ENCODE measurements at regions of chr1 and their contacts with region 1.

Region 1: DNA sequence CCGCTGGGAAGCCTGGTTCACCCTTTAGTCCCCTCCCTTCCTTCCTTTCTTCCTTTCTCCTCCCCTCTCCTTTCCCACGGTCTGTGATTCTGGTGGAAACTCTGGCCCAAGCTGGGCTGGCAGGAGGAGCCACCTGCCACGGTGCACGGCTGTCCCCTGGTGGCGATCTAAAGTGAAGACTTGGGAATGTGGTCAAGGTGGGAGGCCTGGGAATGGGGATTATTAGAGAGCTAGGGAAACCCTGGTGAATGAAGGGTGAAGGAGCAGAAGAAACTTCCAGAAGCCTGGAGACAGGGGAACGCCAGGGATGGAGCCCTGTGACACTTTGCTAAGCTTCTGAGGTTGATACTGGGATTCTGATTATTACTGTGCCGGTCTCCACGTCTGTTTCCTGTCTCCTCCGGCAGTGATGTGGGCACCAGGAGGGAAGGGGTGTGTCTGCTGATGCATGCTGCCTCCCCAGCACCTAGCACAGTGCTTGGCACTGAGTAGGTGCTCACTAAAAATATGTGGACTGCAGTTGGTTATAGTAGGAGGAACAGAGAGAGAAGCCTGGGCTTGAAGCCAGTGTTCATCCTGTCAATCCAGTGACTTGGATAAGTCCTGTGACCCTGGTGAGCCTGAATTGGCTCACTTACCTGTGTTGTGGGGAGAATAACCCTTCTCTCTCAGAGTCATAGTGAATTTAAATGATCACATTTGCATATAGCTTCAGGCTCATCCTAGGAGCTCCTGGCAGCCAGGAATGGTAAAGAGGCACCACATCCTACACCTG is 71.2 kb upstream of the NBPF3 start:
- DNase-seq: peak; percentile 86
- H3K4me3 ChIP-seq: no peak overlapping the region
- H3K27ac ChIP-seq: no peak overlapping the region
- H3K4me1 ChIP-seq: no peaks in the 10 kb centered on the region
- H3K27me3 ChIP-seq: no peaks in the 10 kb centered on the region
- CTCF ChIP-seq: peak; percentile 98

Region 2: DNA sequence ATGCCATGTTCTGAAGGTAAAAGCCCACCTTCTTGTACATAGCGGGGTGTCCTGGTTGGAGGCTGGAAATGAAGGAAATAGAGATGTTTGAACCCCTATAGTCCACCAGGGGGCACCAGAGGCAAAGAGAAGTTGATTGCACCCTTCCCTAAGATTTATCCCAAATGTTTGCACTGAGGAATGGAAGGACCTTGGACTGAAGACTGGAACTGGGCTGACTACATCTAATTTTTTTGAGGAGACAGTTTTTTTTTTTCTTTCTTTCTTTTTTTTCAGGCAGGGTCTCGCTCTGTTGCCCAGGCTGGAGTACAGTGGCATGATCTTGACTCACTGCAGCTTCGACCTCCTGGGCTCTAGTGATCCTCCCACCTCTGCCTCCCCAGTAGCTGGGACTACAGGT is 136.7 kb before region 1 on chr1:
- CTCF ChIA-PET with region 1: interaction called, 28 read pairs
- POLR2A ChIA-PET with region 1: interaction called, 4 read pairs
- intact Hi-C with region 1: loop called (anchors 2 kb)
- DNase-seq: peak; percentile 71
- H3K4me3 ChIP-seq: no peak overlapping the region
- H3K27ac ChIP-seq: no peak overlapping the region
- H3K4me1 ChIP-seq: no peaks in the 10 kb centered on the region
- H3K27me3 ChIP-seq: no peaks in the 10 kb centered on the region
- CTCF ChIP-seq: peak; percentile 78

Region 3: DNA sequence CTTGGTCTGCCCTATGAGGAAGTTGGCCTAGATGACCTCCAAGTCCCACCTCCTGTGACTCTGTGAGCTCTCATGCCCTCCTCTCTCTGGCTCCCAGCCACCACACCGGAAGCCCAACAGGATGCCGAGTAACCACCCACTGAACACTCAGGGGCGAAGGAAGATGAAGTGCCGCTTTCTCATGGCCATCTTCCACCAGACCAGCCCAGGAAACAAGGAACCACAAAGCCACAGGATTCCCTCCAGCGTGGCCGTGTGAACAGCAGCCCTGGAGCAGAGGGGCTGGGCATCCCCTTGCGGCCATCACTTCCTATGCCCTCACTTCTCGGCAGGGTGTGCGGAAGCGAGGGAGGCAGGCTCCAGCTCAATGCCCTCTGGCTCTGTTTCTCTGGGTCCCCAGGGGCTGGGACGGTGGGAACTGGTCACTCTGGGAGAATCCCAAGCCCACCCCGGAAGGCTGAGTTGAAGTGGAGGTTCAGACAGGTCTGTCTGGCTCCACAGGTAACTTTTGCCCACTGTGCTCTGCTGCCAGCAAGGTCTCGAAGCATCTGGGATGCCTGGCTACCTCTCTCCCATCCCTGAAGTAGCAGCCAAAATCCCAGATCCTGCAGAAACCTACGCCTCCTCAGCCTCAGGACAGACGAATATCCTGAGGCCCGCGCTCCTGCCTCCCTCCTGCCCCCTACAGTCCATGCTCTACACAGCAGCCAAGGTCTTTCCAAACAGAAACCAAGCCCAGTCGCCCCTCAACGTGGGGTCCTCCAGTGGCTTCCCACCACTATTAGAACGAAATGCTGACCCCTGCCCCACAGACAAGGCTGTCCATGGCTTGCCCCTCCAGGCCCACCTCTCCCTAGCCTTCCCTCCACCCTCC is 34.3 kb before region 1 on chr1:
- CTCF ChIA-PET with region 1: interaction called, 14 read pairs
- POLR2A ChIA-PET with region 1: no interaction called
- intact Hi-C with region 1: no loop called
- DNase-seq: peak; percentile 78
- H3K4me3 ChIP-seq: peak overlapping the region; percentile 50
- H3K27ac ChIP-seq: peak overlapping the region; percentile 70
- H3K4me1 ChIP-seq: peaks cover 35% of the 10 kb centered on the region
- H3K27me3 ChIP-seq: no peaks in the 10 kb centered on the region
- CTCF ChIP-seq: peak; percentile 87

Region 4: DNA sequence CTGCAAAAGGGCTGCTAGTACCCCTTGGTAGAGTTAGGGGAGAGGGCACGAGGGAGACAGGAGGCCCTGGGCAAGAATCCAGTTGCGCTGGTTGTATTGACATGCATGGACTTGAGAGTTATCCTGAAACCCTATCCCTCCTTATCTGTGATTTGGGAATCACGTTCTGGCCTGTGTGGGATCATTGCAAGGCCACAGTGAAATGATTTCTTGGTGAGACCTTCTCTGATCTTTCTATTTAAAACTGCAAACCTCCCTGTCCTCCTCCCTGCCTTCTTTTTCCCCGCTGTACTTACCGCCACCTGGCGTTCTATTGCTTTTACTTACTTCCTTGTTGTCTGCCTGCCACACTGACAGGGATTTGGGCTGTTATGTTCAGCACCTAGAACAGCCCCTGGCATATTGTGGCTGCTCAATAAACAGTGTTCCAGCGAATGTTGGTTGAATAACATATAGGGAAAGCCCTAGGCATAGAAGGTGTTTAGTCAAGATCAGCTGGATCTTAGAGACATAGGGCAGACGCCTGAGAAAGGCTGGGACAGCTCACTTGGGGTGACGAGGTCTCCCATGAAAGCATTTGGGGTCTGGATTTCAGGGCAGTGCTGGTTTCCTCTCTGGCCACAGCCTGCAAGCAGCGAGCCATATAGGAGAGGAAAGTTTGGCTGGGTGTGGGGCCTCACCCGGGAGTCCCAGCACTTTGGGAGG is 166.1 kb after region 1 on chr1:
- CTCF ChIA-PET with region 1: no interaction called
- POLR2A ChIA-PET with region 1: no interaction called
- intact Hi-C with region 1: loop called (anchors 5 kb)
- DNase-seq: peak; percentile 60
- H3K4me3 ChIP-seq: no peak overlapping the region
- H3K27ac ChIP-seq: no peak overlapping the region
- H3K4me1 ChIP-seq: no peaks in the 10 kb centered on the region
- H3K27me3 ChIP-seq: no peaks in the 10 kb centered on the region
- CTCF ChIP-seq: peak; percentile 71

Region 5: GRCh38 chr1:21594935-21595897 is 226.5 kb after region 1 on chr1:
- CTCF ChIA-PET with region 1: interaction called, 3 read pairs
- POLR2A ChIA-PET with region 1: no interaction called
- intact Hi-C with region 1: loop called (anchors 5 kb)
- DNase-seq: peak; percentile 89
- H3K4me3 ChIP-seq: no peak overlapping the region
- H3K27ac ChIP-seq: no peak overlapping the region
- H3K4me1 ChIP-seq: peaks cover 14% of the 10 kb centered on the region
- H3K27me3 ChIP-seq: no peaks in the 10 kb centered on the region
- CTCF ChIP-seq: peak; percentile 89

Measured in A673 (cell line).